ENCODE measurements at regions of chr10 and their contacts with region 1.

Region 1: GRCh38 chr10:124461438-124462347 is at the start of gene LHPP:
- DNase-seq: peak; percentile 91
- ATAC-seq: peak; percentile 92
- H3K4me3 Mint-ChIP-seq: peak within 1 kb of the TSS; percentile 92
- H3K27ac Mint-ChIP-seq: peak within 1 kb of the TSS; percentile 95
- H3K4me1 Mint-ChIP-seq: peaks cover 32% of the 10 kb centered on the region
- H3K27me3 Mint-ChIP-seq: peaks cover 4% of the 10 kb centered on the region
- CTCF ChIP-seq: no peak
- total RNA-seq, gene LHPP: 21.0 and 22.9 TPM in 2 replicates

Region 2: DNA sequence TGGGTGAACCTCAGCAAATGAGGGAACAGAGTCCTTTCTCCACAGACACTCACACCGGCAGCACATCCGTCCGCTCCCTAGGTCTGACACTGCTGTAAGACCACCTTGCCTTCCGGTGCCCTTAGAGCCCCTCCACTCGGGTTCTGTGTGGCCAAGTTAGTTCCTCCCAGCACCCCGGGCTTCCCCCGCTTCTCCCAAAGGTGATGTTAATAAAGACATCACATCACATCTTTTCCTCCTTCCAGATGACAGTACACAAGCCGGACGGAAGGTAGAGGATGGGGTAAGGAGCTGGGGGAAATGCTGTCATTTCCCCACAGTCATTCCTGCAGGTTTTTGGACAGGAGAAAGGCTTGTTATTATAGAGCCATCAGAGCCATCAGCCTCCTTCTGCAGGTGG is 85.3 kb before region 1 on chr10:
- CTCF ChIA-PET with region 1: no interaction called
- POLR2A ChIA-PET with region 1: no interaction called
- intact Hi-C with region 1: no loop called
- DNase-seq: no peak
- ATAC-seq: no peak
- H3K4me3 Mint-ChIP-seq: no peak overlapping the region
- H3K27ac Mint-ChIP-seq: no peak overlapping the region
- H3K4me1 Mint-ChIP-seq: no peaks in the 10 kb centered on the region
- H3K27me3 Mint-ChIP-seq: peaks cover 40% of the 10 kb centered on the region
- CTCF ChIP-seq: no peak

Region 3: GRCh38 chr10:124418726-124419501 is 42.8 kb before region 1 on chr10 and contains the start of gene OAT:
- CTCF ChIA-PET with region 1: interaction called, 4 read pairs
- POLR2A ChIA-PET with region 1: interaction called, 5 read pairs
- intact Hi-C with region 1: loop called (anchors 1 kb)
- DNase-seq: peak; percentile 92
- ATAC-seq: peak; percentile 97
- H3K4me3 Mint-ChIP-seq: peak within 1 kb of the TSS; percentile 82
- H3K27ac Mint-ChIP-seq: peak within 1 kb of the TSS; percentile 46
- H3K4me1 Mint-ChIP-seq: peaks cover 12% of the 10 kb centered on the region
- H3K27me3 Mint-ChIP-seq: peaks cover 19% of the 10 kb centered on the region
- CTCF ChIP-seq: no peak
- total RNA-seq, gene OAT: 19.6 and 20.1 TPM in 2 replicates

Region 4: DNA sequence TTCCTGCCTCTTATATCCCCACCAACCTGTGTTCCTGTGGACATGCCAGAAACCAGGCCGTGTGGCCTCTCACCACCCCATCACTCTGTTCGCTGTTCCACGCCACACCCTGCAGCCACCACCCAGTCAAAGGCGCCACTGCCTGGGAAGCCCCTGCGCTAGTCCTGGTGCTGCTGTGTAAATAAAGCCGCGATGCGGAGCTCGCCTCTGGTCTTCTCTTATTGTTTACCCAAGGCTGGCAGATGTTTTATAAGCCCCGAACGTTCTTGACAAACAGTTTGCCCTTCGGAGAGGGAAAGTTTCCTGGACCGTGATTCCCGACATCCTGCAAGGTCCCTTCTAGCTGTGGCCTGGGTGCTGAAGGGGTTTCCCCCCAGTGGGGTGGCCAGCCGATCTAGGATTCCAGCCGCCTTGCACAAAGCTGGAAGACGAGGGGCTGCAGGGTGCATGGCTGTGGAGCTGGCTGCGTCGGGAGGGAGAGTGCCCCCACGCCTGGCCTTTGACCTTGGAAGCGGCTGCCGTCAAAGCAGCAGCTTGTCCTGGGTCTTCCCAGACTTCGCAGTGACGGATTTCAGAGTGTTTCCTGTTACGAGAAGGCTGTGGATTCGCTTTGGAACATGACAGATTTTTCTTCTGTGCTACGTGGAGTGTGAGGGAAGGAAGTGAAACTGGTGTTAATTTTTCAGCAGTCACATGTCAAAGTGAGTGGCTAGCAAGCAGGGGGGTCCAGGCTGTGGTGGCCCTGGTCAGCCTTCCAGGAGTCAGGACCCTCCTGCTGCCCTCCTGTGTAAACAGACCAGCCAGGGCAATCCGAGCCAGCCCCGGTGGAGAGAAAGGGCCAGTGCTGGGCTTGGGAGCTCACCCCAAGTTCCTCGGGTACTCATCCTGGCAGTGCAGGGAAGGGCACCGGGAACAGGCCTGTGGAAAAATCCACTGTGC is 61.5 kb after region 1 on chr10:
- CTCF ChIA-PET with region 1: no interaction called
- POLR2A ChIA-PET with region 1: no interaction called
- intact Hi-C with region 1: loop called (anchors 1 kb)
- DNase-seq: no peak
- ATAC-seq: peak; percentile 77
- H3K4me3 Mint-ChIP-seq: peak overlapping the region; percentile 68
- H3K27ac Mint-ChIP-seq: peak overlapping the region; percentile 50
- H3K4me1 Mint-ChIP-seq: peaks cover 16% of the 10 kb centered on the region
- H3K27me3 Mint-ChIP-seq: no peaks in the 10 kb centered on the region
- CTCF ChIP-seq: no peak

Measured in activated B cell treated with CpG ODN at 0.5 μM for 24 hours (primary cell).